Endothelial cell of umbilical vein (primary cell): ENCODE measurements at regions of chr20 and their contacts with region 1.

Region 1: GRCh38 chr20:5569021-5569420 is 181.2 kb upstream of the SHLD1 start:
- DNase-seq: peak; percentile 74
- H3K4me3 ChIP-seq: no peak overlapping the region
- H3K27ac ChIP-seq: no peak overlapping the region
- H3K4me1 ChIP-seq: peaks cover 8% of the 10 kb centered on the region
- H3K27me3 ChIP-seq: no peaks in the 10 kb centered on the region
- CTCF ChIP-seq: peak; percentile 31 to 39
- POLR2A ChIP-seq: no peak

Region 2: DNA sequence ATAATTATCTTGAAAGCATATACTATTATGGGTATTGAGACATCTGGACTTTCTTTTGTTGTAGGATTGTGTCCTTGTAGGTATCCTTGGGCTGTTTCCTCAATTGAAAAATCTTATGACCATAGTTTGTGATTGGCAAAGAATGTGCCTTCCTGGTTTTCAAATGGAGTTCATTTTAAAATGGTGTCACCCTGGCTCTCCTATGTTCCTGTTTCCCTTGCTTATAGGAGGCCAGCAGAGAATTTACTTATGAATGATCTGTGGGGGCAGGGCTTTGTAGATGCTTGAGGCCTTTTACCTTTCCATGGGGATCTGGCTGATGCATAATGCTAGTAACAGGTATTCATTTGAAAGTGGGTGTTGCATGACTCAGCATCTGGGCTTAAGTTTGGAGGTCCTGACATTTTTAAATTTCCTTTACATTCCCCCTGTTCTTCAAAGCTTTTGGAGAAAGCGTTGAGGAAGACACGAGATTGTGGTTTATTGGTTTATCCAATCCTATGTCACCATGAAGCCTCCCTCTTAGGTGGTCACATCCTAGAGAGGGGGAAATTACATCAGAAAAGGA is 117.3 kb before region 1 on chr20:
- CTCF ChIA-PET with region 1: no interaction called
- POLR2A ChIA-PET with region 1: no interaction called
- dilution Hi-C with region 1: no loop called
- intact Hi-C with region 1: no loop called
- DNase-seq: no peak
- H3K4me3 ChIP-seq: no peak overlapping the region
- H3K27ac ChIP-seq: no peak overlapping the region
- H3K4me1 ChIP-seq: no peaks in the 10 kb centered on the region
- H3K27me3 ChIP-seq: peaks cover 0 to 3% of the 10 kb centered on the region in 2 experiments
- CTCF ChIP-seq: no peak
- POLR2A ChIP-seq: no peak

Region 3: DNA sequence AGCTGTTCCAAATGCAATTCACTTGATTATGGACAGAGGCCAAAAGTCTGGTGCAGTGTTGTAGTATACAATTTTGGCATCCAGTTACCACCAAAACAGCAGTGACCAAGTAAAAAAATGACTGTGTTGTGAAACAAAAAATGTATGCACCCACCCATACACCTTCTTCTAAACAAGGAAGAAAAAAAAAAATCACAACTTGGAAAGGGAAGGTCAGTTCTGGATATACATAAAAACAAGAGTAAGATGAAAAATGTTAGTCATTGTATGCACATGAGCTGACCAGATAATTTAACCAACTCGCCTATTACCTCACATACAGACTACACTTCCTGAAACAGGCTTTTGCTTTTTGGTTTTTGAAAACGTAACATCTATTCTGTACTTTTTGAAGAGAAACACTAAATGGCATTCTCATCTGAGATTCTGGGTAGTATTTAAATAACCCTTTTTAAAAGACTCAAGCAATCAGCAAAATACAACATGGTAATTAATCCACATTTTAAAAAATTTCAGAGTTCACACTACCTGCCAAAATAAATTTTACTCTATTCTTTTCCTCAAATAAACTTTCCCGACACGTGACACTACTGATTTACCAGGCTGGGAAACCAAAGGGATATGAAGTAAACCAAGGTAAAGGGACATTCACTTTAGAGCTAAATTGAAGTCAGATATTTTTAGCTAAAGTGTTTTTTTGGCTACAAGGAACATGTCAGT is 39.6 kb after region 1 on chr20:
- CTCF ChIA-PET with region 1: interaction called, 8 read pairs
- POLR2A ChIA-PET with region 1: no interaction called
- dilution Hi-C with region 1: no loop called
- intact Hi-C with region 1: loop called (anchors 5 kb)
- DNase-seq: peak; percentile 48
- H3K4me3 ChIP-seq: peak overlapping the region in 1 of 3 experiments; percentile 87
- H3K27ac ChIP-seq: no peak overlapping the region
- H3K4me1 ChIP-seq: peaks cover 22% of the 10 kb centered on the region
- H3K27me3 ChIP-seq: no peaks in the 10 kb centered on the region
- CTCF ChIP-seq: no peak
- POLR2A ChIP-seq: no peak

Region 4: DNA sequence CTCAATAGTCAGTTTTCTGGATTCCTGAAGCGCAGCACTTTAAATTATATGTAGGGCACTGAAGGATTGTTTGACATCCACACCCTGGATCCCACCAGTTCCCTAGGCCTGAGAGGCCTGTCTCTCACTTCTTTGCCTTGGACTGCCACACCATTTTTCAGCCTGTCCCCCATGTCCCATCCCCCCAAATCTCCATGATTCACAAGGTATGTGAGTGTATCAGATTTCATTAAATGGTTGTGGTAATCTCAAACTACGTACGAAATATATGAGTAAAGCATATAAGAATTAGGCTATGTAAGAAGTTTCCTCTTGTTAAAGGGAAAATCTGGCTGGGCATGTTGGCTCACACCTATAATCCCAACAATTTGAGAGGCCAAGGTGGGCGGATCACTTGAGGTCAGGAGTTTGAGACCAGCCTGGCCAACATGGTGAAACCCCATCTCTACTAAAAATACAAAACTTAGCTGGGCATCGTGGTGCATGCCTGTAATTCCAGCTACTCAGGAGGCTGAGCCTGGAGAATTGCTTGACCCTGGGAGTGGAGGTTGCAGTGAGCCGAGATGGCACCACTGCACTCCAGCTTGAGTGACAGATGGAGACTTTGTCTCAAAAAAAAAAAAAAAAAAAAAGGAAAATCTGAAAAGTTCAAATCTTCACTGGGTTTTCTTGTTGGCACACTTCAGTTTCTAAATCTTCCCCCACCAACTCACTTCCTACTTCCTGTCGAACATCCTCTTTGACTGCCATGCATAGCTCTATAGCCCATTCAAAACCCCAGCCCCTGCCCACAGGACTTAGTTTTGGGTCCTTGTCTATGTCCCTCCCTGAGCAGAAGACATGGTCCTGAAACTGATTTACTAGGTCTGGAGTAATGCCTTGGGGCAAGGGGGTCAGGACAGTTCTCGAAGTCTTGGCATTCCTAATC is 83.9 kb after region 1 on chr20:
- CTCF ChIA-PET with region 1: no interaction called
- POLR2A ChIA-PET with region 1: no interaction called
- dilution Hi-C with region 1: no loop called
- intact Hi-C with region 1: no loop called
- DNase-seq: no peak
- H3K4me3 ChIP-seq: no peak overlapping the region
- H3K27ac ChIP-seq: no peak overlapping the region
- H3K4me1 ChIP-seq: peaks cover 19% of the 10 kb centered on the region
- H3K27me3 ChIP-seq: no peaks in the 10 kb centered on the region
- CTCF ChIP-seq: no peak
- POLR2A ChIP-seq: no peak

Region 5: DNA sequence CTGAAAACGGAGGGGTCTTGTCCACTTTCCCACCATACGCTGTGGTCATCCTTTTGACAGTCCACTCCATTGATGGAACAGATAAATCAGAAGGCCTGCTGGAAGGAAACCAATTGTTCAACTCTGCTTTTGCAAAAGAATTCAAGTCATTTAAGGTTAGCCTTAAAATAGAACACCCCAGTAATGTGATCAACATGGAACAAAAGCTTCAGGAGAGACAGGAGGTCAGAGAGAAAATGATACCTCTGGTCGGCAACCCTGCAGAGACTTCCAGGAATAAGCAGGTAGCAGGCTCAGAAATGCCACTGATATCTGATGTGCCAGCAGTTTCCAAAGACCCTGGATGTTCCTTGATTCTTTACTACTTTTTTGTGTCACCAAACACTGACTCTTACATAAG is 141.5 kb after region 1 on chr20:
- CTCF ChIA-PET with region 1: no interaction called
- POLR2A ChIA-PET with region 1: no interaction called
- dilution Hi-C with region 1: no loop called
- intact Hi-C with region 1: no loop called
- DNase-seq: no peak
- H3K4me3 ChIP-seq: no peak overlapping the region
- H3K27ac ChIP-seq: no peak overlapping the region
- H3K4me1 ChIP-seq: peaks cover 10% of the 10 kb centered on the region
- H3K27me3 ChIP-seq: peaks cover 8 to 14% of the 10 kb centered on the region in 2 experiments
- CTCF ChIP-seq: no peak
- POLR2A ChIP-seq: no peak

Region 6: DNA sequence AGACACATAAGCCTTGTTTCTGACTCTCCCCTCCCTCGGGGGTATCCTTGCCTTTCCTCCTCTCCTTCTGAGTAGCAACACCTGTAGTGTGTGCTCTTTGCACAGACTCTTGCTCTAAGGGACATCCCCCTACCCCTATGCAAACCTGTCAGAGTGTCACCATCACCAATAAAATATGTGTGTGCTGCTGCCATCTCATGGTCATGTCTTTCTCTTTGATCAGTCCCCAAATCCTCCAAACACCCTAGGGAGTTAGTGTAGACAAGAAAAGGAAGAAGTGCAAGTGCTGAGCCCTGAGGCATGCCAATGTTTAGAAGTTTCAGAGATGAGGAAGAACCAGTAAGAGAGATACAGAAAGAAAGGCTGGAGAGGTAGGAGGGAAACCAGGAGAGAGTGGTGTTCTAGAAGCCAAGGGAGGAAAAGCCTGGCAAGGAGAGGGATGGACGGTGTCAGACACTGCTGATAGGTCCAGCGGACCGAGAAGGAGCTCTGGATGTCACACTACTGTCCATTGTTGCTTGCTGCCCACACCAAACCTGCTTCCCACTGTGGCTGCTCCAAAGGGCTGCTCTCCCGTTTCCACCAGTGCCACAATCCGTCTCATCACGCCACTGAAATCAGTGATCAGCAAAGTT is 364.9 kb after region 1 on chr20:
- CTCF ChIA-PET with region 1: no interaction called
- POLR2A ChIA-PET with region 1: no interaction called
- dilution Hi-C with region 1: no loop called
- intact Hi-C with region 1: loop called (anchors 5 kb)
- DNase-seq: peak; percentile 25
- H3K4me3 ChIP-seq: no peak overlapping the region
- H3K27ac ChIP-seq: no peak overlapping the region
- H3K4me1 ChIP-seq: no peaks in the 10 kb centered on the region
- H3K27me3 ChIP-seq: peaks cover 2 to 6% of the 10 kb centered on the region in 2 experiments
- CTCF ChIP-seq: no peak
- POLR2A ChIP-seq: no peak

Region 7: GRCh38 chr20:6008254-6008653 is 439.2 kb after region 1 on chr20:
- CTCF ChIA-PET with region 1: no interaction called
- POLR2A ChIA-PET with region 1: no interaction called
- dilution Hi-C with region 1: no loop called
- intact Hi-C with region 1: loop called (anchors 1 kb)
- DNase-seq: peak; percentile 74
- H3K4me3 ChIP-seq: peak overlapping the region in 1 of 3 experiments; percentile 14
- H3K27ac ChIP-seq: no peak overlapping the region
- H3K4me1 ChIP-seq: peaks cover 23% of the 10 kb centered on the region
- H3K27me3 ChIP-seq: no peaks in the 10 kb centered on the region
- CTCF ChIP-seq: no peak
- POLR2A ChIP-seq: no peak